GM12878 (cell line): ENCODE measurements at regions of chr7 and their contacts with region 1.

Region 1: DNA sequence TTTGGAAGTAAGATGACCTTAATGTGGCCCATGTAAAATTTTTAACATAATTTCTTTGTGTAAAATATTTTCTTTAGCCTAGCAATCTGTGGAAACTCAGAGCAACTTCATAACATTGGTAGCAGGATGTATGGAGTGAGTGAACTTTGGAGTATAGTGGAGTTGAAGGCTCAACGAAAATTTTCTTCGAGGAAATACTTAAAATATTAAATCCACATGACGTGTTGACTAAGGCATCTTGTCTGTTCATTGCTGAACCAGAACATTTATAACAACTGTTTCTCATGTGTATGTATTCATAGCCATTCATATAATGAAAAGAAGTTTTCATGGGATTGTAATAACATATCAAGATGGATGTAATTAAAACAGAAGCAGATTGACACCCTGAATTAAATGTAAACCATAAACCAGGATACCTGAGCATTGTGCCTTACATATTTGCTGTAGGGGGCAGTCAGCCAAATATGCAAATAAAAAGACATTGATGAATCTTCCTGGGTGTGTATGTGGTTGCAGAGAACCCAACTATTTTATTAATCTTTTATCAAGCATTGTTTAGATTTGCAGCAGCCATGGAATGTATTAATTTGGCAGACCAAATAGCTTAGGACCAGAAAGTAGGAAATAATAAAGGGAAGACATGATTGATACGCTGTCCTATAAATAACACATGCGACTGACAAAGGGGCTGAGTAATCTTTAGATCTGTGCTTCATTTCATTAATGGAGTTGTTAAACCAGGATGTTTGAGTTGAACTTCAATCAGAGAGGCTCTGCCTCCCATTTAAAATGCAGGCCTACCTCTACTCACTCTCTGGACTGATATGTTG is 11.5 kb downstream of the AUTS2 start:
- DNase-seq: no peak
- ATAC-seq: peak; percentile 48
- H3K4me3 ChIP-seq: no peak overlapping the region
- H3K27ac ChIP-seq: no peak overlapping the region
- H3K4me1 ChIP-seq: peaks cover 5% of the 10 kb centered on the region; the same call in 1 of the 2 replicates
- H3K27me3 ChIP-seq: no peaks in the 10 kb centered on the region
- CTCF ChIP-seq: no peak
- EP300 ChIP-seq: no peak
- POLR2A ChIP-seq: no peak
- RAD21 ChIP-seq: no peak

Region 2: GRCh38 chr7:67625257-67625737 is 1984.5 kb before region 1 on chr7:
- CTCF ChIA-PET with region 1: no interaction called
- POLR2A ChIA-PET with region 1: no interaction called
- RAD21 ChIA-PET with region 1: no interaction called
- SMC1A ChIA-PET with region 1: no interaction called
- in situ Hi-C with region 1: no loop called
- intact Hi-C with region 1: no loop called
- DNase-seq: no peak
- ATAC-seq: peak; percentile 81
- H3K4me3 ChIP-seq: no peak overlapping the region
- H3K27ac ChIP-seq: no peak overlapping the region
- H3K4me1 ChIP-seq: no peaks in the 10 kb centered on the region
- H3K27me3 ChIP-seq: no peaks in the 10 kb centered on the region
- CTCF ChIP-seq: peak; percentile 71 to 81 (median 72)
- EP300 ChIP-seq: no peak
- POLR2A ChIP-seq: no peak
- RAD21 ChIP-seq: peak; percentile 79

Region 3: GRCh38 chr7:69498671-69499070 is 111.1 kb before region 1 on chr7:
- CTCF ChIA-PET with region 1: no interaction called
- POLR2A ChIA-PET with region 1: no interaction called
- RAD21 ChIA-PET with region 1: no interaction called
- SMC1A ChIA-PET with region 1: no interaction called
- in situ Hi-C with region 1: no loop called
- intact Hi-C with region 1: no loop called
- DNase-seq: no peak
- ATAC-seq: no peak
- H3K4me3 ChIP-seq: no peak overlapping the region
- H3K27ac ChIP-seq: no peak overlapping the region
- H3K4me1 ChIP-seq: 0 out of 2 replicates have a peak, but pooled peaks cover 3% of the 10 kb centered on the region
- H3K27me3 ChIP-seq: no peaks in the 10 kb centered on the region
- CTCF ChIP-seq: no peak
- EP300 ChIP-seq: no peak
- POLR2A ChIP-seq: no peak
- RAD21 ChIP-seq: no peak

Region 4: DNA sequence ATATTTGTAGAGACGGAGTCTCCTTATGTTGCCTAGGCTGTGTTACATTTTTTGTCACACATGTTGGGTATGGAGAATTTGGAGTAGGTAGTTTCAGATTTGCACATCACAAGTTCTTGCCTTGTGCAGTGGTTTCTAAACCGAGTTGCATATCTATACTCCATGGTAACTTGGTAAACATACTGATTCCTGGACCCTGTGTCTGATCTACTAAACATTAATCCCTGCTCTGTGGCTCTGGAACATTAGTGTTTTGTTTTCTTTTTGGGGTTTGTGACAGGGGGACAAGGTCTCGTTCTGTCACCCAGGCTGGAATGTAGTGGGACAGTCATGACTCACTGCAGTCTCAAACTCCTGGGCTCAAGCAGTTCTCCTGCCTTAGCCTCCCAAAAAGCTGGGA is 13.2 kb after region 1 on chr7:
- CTCF ChIA-PET with region 1: interaction called, 17 read pairs
- POLR2A ChIA-PET with region 1: interaction called, 5 read pairs
- RAD21 ChIA-PET with region 1: interaction called, 22 read pairs
- SMC1A ChIA-PET with region 1: interaction called, 32 read pairs
- in situ Hi-C with region 1: no loop called
- intact Hi-C with region 1: no loop called
- DNase-seq: no peak
- ATAC-seq: peak; percentile 80
- H3K4me3 ChIP-seq: no peak overlapping the region
- H3K27ac ChIP-seq: no peak overlapping the region
- H3K4me1 ChIP-seq: 0 out of 2 replicates have a peak, but pooled peaks cover 7% of the 10 kb centered on the region
- H3K27me3 ChIP-seq: no peaks in the 10 kb centered on the region
- CTCF ChIP-seq: no peak
- EP300 ChIP-seq: no peak
- POLR2A ChIP-seq: no peak
- RAD21 ChIP-seq: no peak